A549 (cell line): ENCODE measurements at regions of chr12 and their contacts with region 1.

Region 1: GRCh38 chr12:113174461-113175384 is 10.6 kb downstream of the DDX54 start:
- DNase-seq: peak; percentile 68 to 88
- ATAC-seq: peak; percentile 87 to 92
- H3K4me3 ChIP-seq: no peak overlapping the region
- H3K27ac ChIP-seq: no peak overlapping the region
- H3K4me1 ChIP-seq: no peaks in the 10 kb centered on the region
- CTCF ChIP-seq: peak; percentile 91
- EP300 ChIP-seq: no peak
- POLR2A ChIP-seq: no peak
- RAD21 ChIP-seq: peak; percentile 79 to 85

Region 2: DNA sequence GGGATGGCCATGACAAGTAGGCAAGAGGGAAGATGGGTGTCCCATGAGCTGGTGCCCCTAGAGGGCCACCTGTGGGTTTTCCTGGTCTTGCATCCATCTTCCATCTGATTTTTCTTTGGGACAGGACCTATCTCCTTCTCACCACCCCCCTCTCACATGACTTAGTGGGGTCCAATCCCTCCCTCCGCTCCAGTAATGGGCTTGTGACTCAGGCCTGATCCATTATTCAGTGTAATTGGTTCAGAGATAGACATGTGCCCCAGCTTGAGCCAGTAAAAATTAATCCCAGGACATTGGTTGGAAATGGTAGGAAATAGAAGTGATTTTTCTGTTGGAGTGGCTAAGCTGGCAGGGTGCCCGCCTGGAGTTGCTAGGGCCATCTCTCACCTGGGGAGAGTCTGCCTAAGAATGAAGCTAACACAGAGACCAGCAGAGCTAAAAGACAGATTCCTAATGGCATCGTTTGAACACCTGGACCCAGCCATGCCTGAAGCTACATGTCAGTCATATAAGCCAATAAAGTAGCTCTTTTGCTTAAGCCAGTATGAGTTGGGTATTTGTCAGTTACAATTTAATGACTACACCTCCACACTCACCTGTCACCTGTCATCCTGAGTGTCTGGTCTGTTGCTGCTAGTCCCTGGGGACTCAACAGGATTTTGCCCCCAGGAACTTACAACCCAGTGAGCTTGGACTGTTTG is 53.9 kb before region 1 on chr12:
- CTCF ChIA-PET with region 1: interaction called, 11 read pairs
- POLR2A ChIA-PET with region 1: no interaction called
- DNase-seq: peak in 1 of 2 experiments; percentile 31
- ATAC-seq: peak; percentile 31 to 62; a peak in 4 of 6 replicates
- H3K4me3 ChIP-seq: no peak overlapping the region
- H3K27ac ChIP-seq: no peak overlapping the region
- H3K4me1 ChIP-seq: no peaks in the 10 kb centered on the region
- CTCF ChIP-seq: no peak
- EP300 ChIP-seq: no peak
- POLR2A ChIP-seq: no peak
- RAD21 ChIP-seq: no peak

Region 3: DNA sequence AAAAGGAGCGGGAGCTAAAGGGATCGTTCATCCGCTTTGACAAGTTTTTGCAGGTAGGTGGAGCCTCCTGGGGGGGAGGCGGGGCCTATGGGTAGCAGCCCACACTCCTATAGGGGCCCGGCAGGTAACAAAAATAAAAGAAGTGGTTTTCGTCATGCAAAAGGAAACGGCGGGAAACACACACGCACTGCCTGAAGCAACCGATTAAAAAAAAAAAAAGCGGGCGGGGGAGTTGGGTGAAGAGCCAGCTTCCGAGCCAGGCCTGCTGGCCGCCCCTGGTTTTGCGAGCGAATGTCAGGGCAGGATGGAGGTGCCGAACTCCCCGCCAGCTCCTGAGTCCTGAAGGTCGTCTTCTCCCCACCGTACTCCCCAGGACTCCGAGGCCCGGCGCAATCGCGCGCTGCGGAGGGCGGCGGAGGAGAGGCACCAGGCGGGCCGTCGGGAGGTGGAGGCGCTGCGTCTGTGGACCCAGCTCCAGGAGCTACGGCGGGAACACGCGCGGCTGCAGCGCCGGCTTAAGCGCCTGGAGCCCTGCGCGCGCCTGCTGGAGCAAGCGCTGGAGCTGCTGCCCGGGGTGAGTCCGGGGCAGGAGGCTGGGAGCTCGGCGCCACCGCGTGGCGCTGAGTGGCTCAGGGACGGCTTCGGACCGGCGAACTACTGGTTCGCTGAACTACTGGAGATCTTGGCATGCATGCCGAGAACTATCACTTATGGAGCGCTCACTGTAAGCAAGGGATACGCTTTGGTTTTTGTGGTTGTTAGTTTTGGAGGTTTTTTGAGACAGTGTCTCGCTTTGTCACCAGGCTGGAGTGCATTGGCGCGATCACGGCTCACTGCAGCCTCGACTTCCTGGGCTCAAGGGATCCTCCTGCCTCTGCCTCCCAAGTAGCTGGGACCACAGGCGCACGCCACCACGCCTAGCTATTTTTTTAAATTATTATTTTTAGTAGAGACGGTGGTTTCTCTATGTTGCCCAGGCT is 21.6 kb before region 1 on chr12:
- CTCF ChIA-PET with region 1: interaction called, 49 read pairs
- POLR2A ChIA-PET with region 1: no interaction called
- DNase-seq: peak; percentile 90 to 92
- ATAC-seq: peak; percentile 83 to 92
- H3K4me3 ChIP-seq: peak overlapping the region; percentile 43
- H3K27ac ChIP-seq: peak overlapping the region in 1 of 2 experiments; percentile 69; a peak in 2 of 6 replicates
- H3K4me1 ChIP-seq: peaks cover 6% of the 10 kb centered on the region; the same call in 1 of the 3 replicates
- CTCF ChIP-seq: peak; percentile 65
- EP300 ChIP-seq: no peak
- POLR2A ChIP-seq: no peak
- RAD21 ChIP-seq: peak; percentile 67 to 75

Region 4: DNA sequence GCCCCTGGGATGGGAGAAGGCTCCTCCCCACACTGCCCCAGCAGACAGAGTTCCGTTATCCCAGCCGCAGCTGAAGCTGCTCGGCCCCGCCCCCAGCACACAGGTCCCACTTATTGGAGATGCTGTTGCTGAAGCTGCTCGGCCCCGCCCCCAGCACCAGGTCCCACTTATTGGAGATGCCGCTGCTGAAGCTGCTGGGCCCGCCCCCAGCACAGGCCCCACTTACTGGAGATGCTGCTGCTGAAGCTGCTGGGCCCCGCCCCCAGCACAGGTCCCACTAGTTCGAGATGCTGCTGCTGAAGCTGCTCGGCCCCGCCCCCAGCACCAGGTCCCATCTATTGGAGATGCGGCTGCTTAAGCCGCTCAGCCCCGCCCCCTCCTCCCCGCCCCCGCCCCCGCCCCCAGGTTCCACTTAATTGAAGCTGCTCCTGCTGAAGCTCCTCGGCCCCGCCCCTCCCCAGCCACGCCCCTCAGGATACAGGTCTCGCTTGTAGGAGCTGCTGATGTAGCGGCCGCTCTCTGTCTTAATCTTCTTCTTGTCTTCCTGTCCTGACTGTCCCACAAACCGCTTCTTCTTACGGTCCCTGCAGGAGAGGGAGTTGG is 13.2 kb before region 1 on chr12:
- CTCF ChIA-PET with region 1: interaction called, 38 read pairs
- POLR2A ChIA-PET with region 1: interaction called, 3 read pairs
- DNase-seq: peak; percentile 48 to 85
- ATAC-seq: peak; percentile 8 to 73; a peak in 3 of 6 replicates
- H3K4me3 ChIP-seq: no peak overlapping the region
- H3K27ac ChIP-seq: no peak overlapping the region
- H3K4me1 ChIP-seq: peaks cover 12% of the 10 kb centered on the region
- CTCF ChIP-seq: no peak
- EP300 ChIP-seq: no peak
- POLR2A ChIP-seq: no peak
- RAD21 ChIP-seq: no peak

Region 5: GRCh38 chr12:113184900-113185773 is 10.4 kb after region 1 on chr12 and contains the starts of genes DDX54 and RITA1:
- CTCF ChIA-PET with region 1: interaction called, 20 read pairs
- POLR2A ChIA-PET with region 1: interaction called, 7 read pairs
- DNase-seq: peak; percentile 90 to 93
- ATAC-seq: peak; percentile 94
- H3K4me3 ChIP-seq: peak within 1 kb of the TSS; percentile 89
- H3K27ac ChIP-seq: peak within 1 kb of the TSS; percentile 96 to 98
- H3K4me1 ChIP-seq: peaks cover 20% of the 10 kb centered on the region
- CTCF ChIP-seq: no peak
- EP300 ChIP-seq: no peak
- POLR2A ChIP-seq: peak; percentile 78; the same call in 1 of the 2 replicates
- RAD21 ChIP-seq: no peak
- polyA plus RNA-seq, gene DDX54: 60.6 and 62.4 TPM in 2 replicates
- polyA plus RNA-seq, gene RITA1: 16.7 and 18.6 TPM in 2 replicates